ENCODE measurements at regions of chr15 and their contacts with region 1.

Region 1: GRCh38 chr15:33132722-33133345 is 61.7 kb downstream of the FMN1 start:
- DNase-seq: no peak
- ATAC-seq: peak; percentile 55
- H3K4me3 ChIP-seq: no peak overlapping the region
- H3K27ac ChIP-seq: no peak overlapping the region
- H3K4me1 ChIP-seq: no peaks in the 10 kb centered on the region
- H3K27me3 ChIP-seq: no peaks in the 10 kb centered on the region; a peak in 2 of 4 replicates
- CTCF ChIP-seq: peak; percentile 40 to 46 (median 42); a peak in 4 of 6 replicates
- EP300 ChIP-seq: no peak
- POLR2A ChIP-seq: no peak
- RAD21 ChIP-seq: peak; percentile 61

Region 2: GRCh38 chr15:33021806-33022389 is 110.9 kb before region 1 on chr15:
- CTCF ChIA-PET with region 1: interaction called, 14 read pairs
- POLR2A ChIA-PET with region 1: no interaction called
- RAD21 ChIA-PET with region 1: no interaction called
- SMC1A ChIA-PET with region 1: interaction called, 4 read pairs
- in situ Hi-C with region 1: no loop called
- intact Hi-C with region 1: loop called (anchors 2 kb)
- DNase-seq: no peak
- ATAC-seq: peak; percentile 58; the same call in 1 of the 3 replicates
- H3K4me3 ChIP-seq: no peak overlapping the region
- H3K27ac ChIP-seq: no peak overlapping the region
- H3K4me1 ChIP-seq: no peaks in the 10 kb centered on the region
- H3K27me3 ChIP-seq: no peaks in the 10 kb centered on the region
- CTCF ChIP-seq: peak; percentile 49 to 62 (median 50); a peak in 5 of 6 replicates
- EP300 ChIP-seq: no peak
- POLR2A ChIP-seq: no peak
- RAD21 ChIP-seq: peak; percentile 49

Region 3: GRCh38 chr15:33168444-33168843 is 35.6 kb after region 1 on chr15:
- CTCF ChIA-PET with region 1: no interaction called
- POLR2A ChIA-PET with region 1: no interaction called
- RAD21 ChIA-PET with region 1: no interaction called
- SMC1A ChIA-PET with region 1: no interaction called
- in situ Hi-C with region 1: no loop called
- intact Hi-C with region 1: no loop called
- DNase-seq: peak; percentile 27
- ATAC-seq: peak; percentile 76
- H3K4me3 ChIP-seq: no peak overlapping the region
- H3K27ac ChIP-seq: no peak overlapping the region
- H3K4me1 ChIP-seq: peaks cover 4% of the 10 kb centered on the region; the same call in 1 of the 2 replicates
- H3K27me3 ChIP-seq: no peaks in the 10 kb centered on the region; a peak in 1 of 4 replicates
- CTCF ChIP-seq: no peak
- EP300 ChIP-seq: peak in 1 of 2 experiments; percentile 47; a peak in 1 of 4 replicates
- POLR2A ChIP-seq: no peak
- RAD21 ChIP-seq: no peak

Measured in GM12878 (cell line).